Posterior vena cava (tissue), 2 donors: ENCODE measurements at regions of chr2 and their contacts with region 1.

Region 1: DNA sequence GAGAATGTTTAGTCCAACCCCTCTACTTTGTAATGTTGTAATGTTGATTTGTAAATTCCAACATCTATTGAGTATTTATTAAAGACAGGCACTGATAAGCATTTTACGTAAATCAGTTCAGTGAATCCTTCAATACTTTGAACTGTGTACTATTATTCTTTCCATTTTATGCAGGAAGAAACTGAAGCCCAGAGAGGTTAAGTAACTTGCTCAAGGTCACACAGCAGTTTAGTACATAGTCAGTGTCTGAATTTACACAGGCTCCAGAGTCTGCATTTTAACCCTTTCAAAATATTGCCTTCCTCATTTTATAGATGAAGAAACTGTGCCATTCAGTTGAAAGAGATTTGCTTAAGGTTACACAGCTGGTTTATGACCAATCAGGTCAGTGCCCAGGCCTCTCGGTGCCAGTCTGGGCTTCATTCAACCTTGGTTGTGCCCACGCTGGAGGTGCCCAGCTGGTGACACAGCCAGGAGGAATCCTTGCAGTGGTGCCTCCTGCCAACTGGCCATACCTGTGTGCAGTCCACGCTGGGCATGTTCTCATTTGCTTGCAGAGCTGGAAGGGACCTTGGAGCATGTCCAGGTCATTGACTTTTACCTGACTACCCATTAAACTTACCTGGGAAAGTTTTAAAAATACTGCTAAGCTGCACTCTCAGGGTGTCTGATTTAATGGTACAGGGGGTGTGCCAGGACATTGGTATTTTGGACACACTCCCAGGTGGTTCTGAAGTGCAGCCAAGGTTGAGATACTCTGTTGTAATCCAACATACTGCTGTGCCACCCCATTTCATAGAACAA is 74.3 kb upstream of the CYRIA start:
- DNase-seq: no peak

Region 2: GRCh38 chr2:16507655-16508489 is 232.1 kb before region 1 on chr2:
- intact Hi-C with region 1: no loop called
- DNase-seq: no peak

Region 3: GRCh38 chr2:16630463-16630862 is 109.5 kb before region 1 on chr2:
- intact Hi-C with region 1: loop called in 1 of 2 experiments (anchors 5 kb)
- DNase-seq: no peak